IMR-90 (cell line): ENCODE measurements at regions of chr7 and their contacts with region 1.

Region 1: DNA sequence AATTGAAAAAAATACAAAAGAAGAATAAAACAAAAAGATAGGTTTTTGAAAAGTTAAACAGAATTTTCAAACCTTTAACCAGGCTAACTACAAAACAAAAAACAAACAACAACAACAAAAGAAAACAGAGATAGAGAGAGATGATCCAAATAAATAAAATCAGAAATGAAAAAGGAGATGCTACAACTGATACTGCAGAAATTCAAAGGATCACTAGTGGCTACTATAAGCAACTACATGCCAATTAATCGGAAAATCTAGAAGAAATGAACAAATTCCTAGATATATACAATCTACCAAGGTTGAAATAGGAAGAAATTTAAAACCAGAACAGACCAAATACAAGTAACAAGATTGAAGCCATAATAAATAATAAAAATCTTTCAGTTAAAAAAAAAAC is 326.8 kb upstream of the VSTM2A start:
- DNase-seq: no peak
- ATAC-seq: no peak
- H3K4me3 ChIP-seq: no peak overlapping the region
- H3K27ac ChIP-seq: no peak overlapping the region
- H3K4me1 ChIP-seq: no peaks in the 10 kb centered on the region
- H3K27me3 ChIP-seq: no peaks in the 10 kb centered on the region
- CTCF ChIP-seq: no peak
- POLR2A ChIP-seq: no peak
- RAD21 ChIP-seq: no peak

Region 2: GRCh38 chr7:54252256-54253035 is 37.0 kb after region 1 on chr7:
- CTCF ChIA-PET with region 1: no interaction called
- POLR2A ChIA-PET with region 1: no interaction called
- dilution Hi-C with region 1: no loop called
- in situ Hi-C with region 1: no loop called
- intact Hi-C with region 1: no loop called
- DNase-seq: no peak
- ATAC-seq: no peak
- H3K4me3 ChIP-seq: no peak overlapping the region
- H3K27ac ChIP-seq: no peak overlapping the region
- H3K4me1 ChIP-seq: no peaks in the 10 kb centered on the region
- H3K27me3 ChIP-seq: no peaks in the 10 kb centered on the region
- CTCF ChIP-seq: no peak
- POLR2A ChIP-seq: no peak
- RAD21 ChIP-seq: no peak

Region 3: DNA sequence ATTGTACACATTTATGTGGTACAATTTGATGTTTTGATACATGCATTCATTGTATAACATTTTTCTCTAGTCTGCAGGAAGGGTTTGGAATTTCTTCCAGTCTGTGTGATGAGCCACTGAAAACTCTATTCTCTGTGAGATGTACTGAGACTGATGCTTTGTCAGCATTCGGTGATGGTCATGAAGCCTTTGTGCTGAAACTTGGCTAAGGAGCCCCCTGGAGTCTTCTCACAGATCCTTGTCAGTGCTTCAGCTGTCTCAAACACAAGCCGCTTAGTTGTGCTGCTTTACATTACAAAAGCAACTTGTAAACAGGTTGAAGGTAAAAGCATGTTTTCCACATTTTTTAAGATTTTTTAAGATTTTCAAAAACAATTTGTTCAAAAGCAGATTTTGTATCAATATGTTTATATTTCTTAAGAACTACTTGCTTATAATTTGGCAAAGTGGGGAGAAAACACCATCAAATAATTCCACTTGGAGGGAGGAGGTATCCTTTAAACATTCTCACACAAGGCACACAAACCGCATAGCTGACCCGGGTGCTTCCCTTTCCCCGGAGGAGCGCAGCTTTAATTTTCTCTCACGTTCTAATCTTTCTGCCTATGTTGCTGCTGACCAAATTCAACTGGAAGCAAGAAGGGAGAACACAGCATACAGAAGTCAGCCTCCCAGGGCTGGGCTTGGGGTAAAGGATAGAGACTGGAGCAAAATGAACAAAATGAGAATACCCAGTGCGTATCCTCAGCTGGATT is 76.9 kb after region 1 on chr7:
- CTCF ChIA-PET with region 1: no interaction called
- POLR2A ChIA-PET with region 1: no interaction called
- dilution Hi-C with region 1: no loop called
- in situ Hi-C with region 1: loop called (anchors 10 kb)
- intact Hi-C with region 1: no loop called
- DNase-seq: no peak
- ATAC-seq: no peak
- H3K4me3 ChIP-seq: no peak overlapping the region
- H3K27ac ChIP-seq: no peak overlapping the region
- H3K4me1 ChIP-seq: no peaks in the 10 kb centered on the region
- H3K27me3 ChIP-seq: no peaks in the 10 kb centered on the region
- CTCF ChIP-seq: no peak
- POLR2A ChIP-seq: no peak
- RAD21 ChIP-seq: no peak